ENCODE measurements at regions of chr9 and their contacts with region 1.

Region 1: GRCh38 chr9:7844242-7844641 is 44.7 kb upstream of the DMAC1 start:
- DNase-seq: peak in 2 of 9 experiments; percentile 50 to 57
- ATAC-seq: peak; percentile 58
- H3K4me3 ChIP-seq: no peak overlapping the region
- H3K4me3 Mint-ChIP-seq: no peak overlapping the region
- H3K27ac ChIP-seq: no peak overlapping the region
- H3K27ac Mint-ChIP-seq: no peak overlapping the region
- H3K4me1 ChIP-seq: no peaks in the 10 kb centered on the region
- H3K4me1 Mint-ChIP-seq: peaks cover 4% of the 10 kb centered on the region
- H3K27me3 ChIP-seq: no peaks in the 10 kb centered on the region
- H3K27me3 Mint-ChIP-seq: no peaks in the 10 kb centered on the region
- CTCF ChIP-seq: peak; percentile 46

Region 2: DNA sequence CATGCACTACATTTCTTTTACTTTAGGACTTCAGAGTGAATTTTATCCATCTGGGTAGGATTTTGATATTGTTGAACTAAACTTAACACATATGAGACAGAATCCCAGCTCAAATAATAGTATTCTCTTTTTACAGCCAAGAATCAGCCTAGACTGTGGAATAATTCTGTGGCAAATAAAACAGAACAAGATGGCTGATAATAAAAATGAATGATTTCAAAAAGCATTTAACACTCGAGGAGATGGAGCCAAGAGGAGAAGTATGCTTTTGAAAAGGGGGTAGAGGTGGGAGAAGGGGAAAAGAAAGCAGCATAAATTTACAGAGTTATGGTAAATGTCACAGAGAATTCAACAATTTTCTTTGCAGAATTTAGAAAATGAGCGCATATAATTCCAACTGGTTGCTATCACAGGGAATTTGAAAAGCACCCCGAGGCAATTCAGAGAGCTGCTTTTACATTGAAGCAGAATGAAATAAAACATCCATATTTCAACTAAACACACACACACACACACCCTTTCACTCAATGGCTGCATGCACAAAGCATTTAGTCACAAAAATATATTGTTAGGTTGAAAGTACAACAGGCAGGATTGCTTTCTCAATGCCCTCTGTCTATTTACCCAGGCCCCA is 15.6 kb after region 1 on chr9:
- CTCF ChIA-PET with region 1: no interaction called
- POLR2A ChIA-PET with region 1: no interaction called
- intact Hi-C with region 1: no loop called
- DNase-seq: no peak
- ATAC-seq: no peak
- H3K4me3 ChIP-seq: no peak overlapping the region
- H3K4me3 Mint-ChIP-seq: no peak overlapping the region
- H3K27ac ChIP-seq: no peak overlapping the region
- H3K27ac Mint-ChIP-seq: no peak overlapping the region
- H3K4me1 ChIP-seq: no peaks in the 10 kb centered on the region
- H3K4me1 Mint-ChIP-seq: peaks cover 4% of the 10 kb centered on the region
- H3K27me3 ChIP-seq: no peaks in the 10 kb centered on the region
- H3K27me3 Mint-ChIP-seq: no peaks in the 10 kb centered on the region
- CTCF ChIP-seq: no peak

Region 3: GRCh38 chr9:8179381-8180053 is 335.3 kb after region 1 on chr9:
- CTCF ChIA-PET with region 1: interaction called, 5 read pairs
- POLR2A ChIA-PET with region 1: no interaction called
- intact Hi-C with region 1: loop called (anchors 5 to 10 kb)
- DNase-seq: no peak
- ATAC-seq: no peak
- H3K4me3 ChIP-seq: no peak overlapping the region
- H3K4me3 Mint-ChIP-seq: no peak overlapping the region
- H3K27ac ChIP-seq: no peak overlapping the region
- H3K27ac Mint-ChIP-seq: no peak overlapping the region
- H3K4me1 ChIP-seq: no peaks in the 10 kb centered on the region
- H3K4me1 Mint-ChIP-seq: no peaks in the 10 kb centered on the region
- H3K27me3 ChIP-seq: no peaks in the 10 kb centered on the region
- H3K27me3 Mint-ChIP-seq: no peaks in the 10 kb centered on the region
- CTCF ChIP-seq: no peak

Region 4: DNA sequence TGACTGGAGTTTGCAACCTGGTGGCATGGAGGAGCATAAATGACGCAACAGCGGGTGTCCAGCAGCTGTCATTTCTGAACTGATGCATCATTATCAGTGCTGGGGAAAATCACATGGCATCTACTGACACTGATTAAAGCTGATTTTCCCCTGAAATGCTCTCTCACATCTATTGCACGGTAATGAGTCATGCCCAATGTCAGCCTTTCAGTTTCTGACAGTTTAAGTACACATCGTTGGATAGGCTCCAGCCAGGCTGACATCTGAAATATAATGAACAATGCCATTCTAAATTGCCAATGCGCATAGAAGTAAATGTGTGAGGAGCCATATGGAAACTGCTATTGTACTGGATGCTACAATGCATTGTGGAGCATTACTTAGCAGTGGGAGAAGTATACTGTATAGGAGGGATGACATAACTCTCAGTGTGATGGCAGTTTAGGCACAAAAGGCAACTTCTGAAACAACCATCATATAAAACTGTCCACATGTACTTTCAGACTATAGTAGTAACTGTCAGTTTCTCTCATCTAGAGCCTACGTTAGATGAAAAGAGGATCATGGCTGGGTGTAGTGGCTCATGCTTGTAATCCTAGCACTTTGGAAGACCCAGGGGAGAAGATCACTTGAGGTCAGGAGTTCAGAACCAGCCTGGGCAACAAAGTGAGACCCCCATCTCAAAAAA is 344.6 kb after region 1 on chr9:
- CTCF ChIA-PET with region 1: interaction called, 5 read pairs
- POLR2A ChIA-PET with region 1: no interaction called
- intact Hi-C with region 1: loop called (anchors 5 to 10 kb)
- DNase-seq: no peak
- ATAC-seq: no peak
- H3K4me3 ChIP-seq: no peak overlapping the region
- H3K4me3 Mint-ChIP-seq: no peak overlapping the region
- H3K27ac ChIP-seq: no peak overlapping the region
- H3K27ac Mint-ChIP-seq: no peak overlapping the region
- H3K4me1 ChIP-seq: no peaks in the 10 kb centered on the region
- H3K4me1 Mint-ChIP-seq: no peaks in the 10 kb centered on the region
- H3K27me3 ChIP-seq: no peaks in the 10 kb centered on the region
- H3K27me3 Mint-ChIP-seq: no peaks in the 10 kb centered on the region
- CTCF ChIP-seq: no peak

Measured in CD8-positive, alpha-beta T cell (primary cell).